ENCODE measurements at regions of chr16 and their contacts with region 1.

Region 1: DNA sequence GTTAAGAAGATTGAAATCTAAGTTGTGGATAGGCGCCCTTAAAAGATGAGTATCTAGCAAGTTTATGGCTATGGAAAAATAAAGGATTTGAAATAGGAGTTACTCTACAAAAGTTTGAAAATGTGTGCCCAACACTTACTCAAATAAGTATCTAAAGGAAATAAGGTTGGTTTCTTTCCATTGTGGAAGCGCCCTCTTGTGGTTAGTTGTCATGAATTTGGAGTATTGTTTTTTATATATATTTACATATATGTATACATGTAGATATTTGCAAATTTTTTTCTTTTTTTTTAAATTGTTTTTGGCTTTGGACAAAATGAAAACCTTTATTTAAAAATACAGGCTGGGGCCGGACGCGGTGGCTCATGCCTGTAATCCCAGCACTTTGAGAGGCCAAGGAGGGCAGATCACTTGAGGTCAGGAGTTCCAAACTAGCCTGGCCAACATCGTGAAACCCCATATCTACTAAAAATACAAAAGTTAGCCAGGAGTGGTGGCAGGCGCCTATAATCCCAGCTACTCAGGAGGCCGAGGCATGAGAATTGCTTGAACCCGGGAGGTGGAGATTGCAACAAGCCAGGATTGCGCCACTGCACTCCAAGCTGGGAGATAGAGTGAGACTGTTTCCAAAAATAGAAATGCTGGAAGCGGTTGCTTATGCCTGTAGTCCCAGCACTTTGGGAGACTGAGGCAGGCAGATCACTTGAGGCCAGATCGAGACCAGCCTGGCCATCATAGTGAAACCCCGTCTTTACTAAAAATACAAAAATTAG is 24.0 kb upstream of the VPS4A start:
- DNase-seq: peak; percentile 76
- ATAC-seq: peak; percentile 63 to 75
- H3K4me3 ChIP-seq: no peak overlapping the region
- H3K27ac ChIP-seq: peak overlapping the region; percentile 61
- H3K4me1 ChIP-seq: peaks cover 14% of the 10 kb centered on the region
- H3K27me3 ChIP-seq: no peaks in the 10 kb centered on the region
- CTCF ChIP-seq: peak; percentile 59

Region 2: DNA sequence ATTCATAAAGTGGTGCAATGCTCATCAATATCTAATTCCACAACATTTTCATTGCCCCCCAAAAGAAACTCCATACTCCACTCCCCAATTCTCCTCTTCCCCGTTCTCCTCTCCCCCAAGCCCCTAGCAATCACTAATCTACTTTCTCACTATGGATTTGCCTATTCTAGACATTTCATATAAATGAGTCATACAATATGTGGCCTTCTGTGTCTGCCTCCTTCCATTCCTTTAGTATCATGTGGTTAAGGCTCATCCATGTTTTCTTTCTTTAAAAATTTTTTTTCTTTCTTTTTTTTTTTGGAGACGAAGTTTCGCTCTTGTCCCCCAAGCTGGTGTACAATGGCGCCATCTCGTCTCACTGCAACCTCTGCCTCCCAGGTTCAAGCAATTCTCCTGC is 238.0 kb before region 1 on chr16:
- intact Hi-C with region 1: no loop called
- DNase-seq: no peak
- ATAC-seq: no peak
- H3K4me3 ChIP-seq: no peak overlapping the region
- H3K27ac ChIP-seq: no peak overlapping the region
- H3K4me1 ChIP-seq: no peaks in the 10 kb centered on the region
- H3K27me3 ChIP-seq: no peaks in the 10 kb centered on the region
- CTCF ChIP-seq: no peak

Region 3: DNA sequence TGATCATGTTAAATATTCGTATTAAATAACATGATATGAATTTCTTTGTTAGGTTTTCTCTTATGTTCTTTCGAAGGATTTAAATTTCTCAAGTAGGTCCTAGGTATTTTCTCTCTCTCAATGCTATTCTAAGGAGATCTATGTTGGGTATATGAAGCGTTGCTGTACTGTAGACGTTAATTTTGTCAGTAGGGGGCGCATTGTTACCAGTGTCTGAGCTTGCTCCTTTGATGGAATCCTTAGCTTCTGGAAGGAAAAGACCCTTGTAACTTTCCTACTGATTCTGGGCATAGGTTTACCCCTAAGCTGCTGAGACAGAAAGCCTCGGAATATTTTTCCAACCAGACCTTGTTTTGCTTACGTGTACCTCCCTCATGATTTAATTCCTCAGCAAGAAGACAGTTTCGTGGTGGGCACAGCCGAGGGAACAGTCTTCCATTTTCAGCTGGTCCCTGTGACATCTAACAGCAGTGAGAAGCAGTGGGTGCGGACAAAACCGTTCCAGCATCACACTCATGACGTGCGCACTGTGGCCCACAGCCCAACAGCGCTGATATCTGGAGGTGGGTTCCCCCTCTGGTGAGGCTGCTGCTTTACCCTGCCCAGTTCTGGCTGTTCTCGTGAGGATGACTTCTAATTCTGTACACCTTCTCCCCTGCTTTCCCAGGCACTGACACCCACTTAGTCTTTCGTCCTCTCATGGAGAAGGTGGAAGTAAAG is 136.8 kb before region 1 on chr16:
- intact Hi-C with region 1: loop called (anchors 5 kb)
- DNase-seq: no peak
- ATAC-seq: peak; percentile 89 to 91
- H3K4me3 ChIP-seq: no peak overlapping the region
- H3K27ac ChIP-seq: no peak overlapping the region
- H3K4me1 ChIP-seq: no peaks in the 10 kb centered on the region
- H3K27me3 ChIP-seq: no peaks in the 10 kb centered on the region
- CTCF ChIP-seq: peak; percentile 79

Region 4: DNA sequence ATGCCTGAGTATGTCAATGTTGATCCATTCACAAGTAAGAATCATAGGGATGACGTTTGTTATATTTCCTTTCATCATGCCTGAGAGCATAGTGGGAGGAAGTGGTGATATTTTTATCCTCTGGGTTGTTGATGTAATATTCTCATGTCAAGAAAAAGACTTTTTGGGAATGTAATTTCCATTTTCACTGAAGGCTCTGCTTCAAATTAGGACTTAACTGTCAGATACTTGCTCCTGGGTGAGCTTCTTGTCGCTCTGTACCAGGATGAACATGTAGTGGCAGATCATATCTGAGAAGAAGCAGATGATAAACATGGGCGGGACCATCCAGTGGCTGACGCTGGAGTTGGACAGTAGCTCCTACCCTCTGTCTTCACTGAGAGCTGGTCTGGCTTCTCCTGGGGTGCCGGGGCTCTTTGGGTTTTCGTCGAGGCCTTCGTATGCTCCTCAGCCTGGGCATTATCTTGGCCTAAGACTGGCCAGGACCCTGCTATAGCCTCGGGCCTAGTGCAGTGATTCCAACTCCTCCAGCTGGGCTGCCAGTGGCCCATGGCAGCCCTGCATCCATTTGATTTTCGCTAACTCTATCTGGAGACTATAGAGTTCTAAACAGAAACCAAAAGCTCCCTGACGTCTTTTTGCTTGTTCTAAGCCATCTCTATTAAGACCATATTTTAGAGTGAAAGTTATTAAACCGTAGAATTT is 157.0 kb after region 1 on chr16:
- intact Hi-C with region 1: no loop called
- DNase-seq: no peak
- ATAC-seq: peak; percentile 56 to 61
- H3K4me3 ChIP-seq: peak overlapping the region; percentile 13
- H3K27ac ChIP-seq: peak overlapping the region; percentile 86
- H3K4me1 ChIP-seq: peaks cover 55% of the 10 kb centered on the region
- H3K27me3 ChIP-seq: no peaks in the 10 kb centered on the region
- CTCF ChIP-seq: no peak

Measured in lower lobe of right lung (tissue), 2 donors.